PC-9 (cell line): ENCODE measurements at regions of chr9 and their contacts with region 1.

Region 1: GRCh38 chr9:84397151-84397728 is 56.7 kb upstream of the SLC28A3 start:
- DNase-seq: peak; percentile 38 to 68
- H3K4me3 ChIP-seq: no peak overlapping the region
- H3K27ac ChIP-seq: no peak overlapping the region
- H3K4me1 ChIP-seq: no peaks in the 10 kb centered on the region
- H3K27me3 ChIP-seq: no peaks in the 10 kb centered on the region
- CTCF ChIP-seq: peak; percentile 92

Region 2: DNA sequence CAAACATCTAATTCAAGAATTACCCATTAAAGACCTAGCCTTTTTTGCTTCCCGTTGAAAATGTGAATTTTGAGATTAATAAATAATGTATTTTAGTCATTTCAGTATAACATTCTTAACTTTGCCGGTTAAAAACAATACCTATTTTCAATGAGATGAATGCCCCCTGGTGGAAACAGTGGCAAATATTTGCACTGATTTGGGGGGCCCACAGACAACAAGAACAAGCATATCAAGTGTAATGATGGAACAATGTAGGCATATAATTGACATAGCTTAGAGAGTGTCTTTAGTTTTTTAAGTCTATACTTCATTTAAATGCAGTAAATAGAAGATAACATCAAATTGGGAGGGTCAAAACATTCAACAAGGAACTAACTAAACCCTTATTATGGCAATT is 384.2 kb after region 1 on chr9:
- CTCF ChIA-PET with region 1: no interaction called
- POLR2A ChIA-PET with region 1: no interaction called
- intact Hi-C with region 1: loop called (anchors 10 kb)
- DNase-seq: no peak
- H3K4me3 ChIP-seq: no peak overlapping the region
- H3K27ac ChIP-seq: no peak overlapping the region
- H3K4me1 ChIP-seq: no peaks in the 10 kb centered on the region
- H3K27me3 ChIP-seq: peaks cover 10% of the 10 kb centered on the region; the same call in 1 of the 2 replicates
- CTCF ChIP-seq: peak; percentile 55

Region 3: DNA sequence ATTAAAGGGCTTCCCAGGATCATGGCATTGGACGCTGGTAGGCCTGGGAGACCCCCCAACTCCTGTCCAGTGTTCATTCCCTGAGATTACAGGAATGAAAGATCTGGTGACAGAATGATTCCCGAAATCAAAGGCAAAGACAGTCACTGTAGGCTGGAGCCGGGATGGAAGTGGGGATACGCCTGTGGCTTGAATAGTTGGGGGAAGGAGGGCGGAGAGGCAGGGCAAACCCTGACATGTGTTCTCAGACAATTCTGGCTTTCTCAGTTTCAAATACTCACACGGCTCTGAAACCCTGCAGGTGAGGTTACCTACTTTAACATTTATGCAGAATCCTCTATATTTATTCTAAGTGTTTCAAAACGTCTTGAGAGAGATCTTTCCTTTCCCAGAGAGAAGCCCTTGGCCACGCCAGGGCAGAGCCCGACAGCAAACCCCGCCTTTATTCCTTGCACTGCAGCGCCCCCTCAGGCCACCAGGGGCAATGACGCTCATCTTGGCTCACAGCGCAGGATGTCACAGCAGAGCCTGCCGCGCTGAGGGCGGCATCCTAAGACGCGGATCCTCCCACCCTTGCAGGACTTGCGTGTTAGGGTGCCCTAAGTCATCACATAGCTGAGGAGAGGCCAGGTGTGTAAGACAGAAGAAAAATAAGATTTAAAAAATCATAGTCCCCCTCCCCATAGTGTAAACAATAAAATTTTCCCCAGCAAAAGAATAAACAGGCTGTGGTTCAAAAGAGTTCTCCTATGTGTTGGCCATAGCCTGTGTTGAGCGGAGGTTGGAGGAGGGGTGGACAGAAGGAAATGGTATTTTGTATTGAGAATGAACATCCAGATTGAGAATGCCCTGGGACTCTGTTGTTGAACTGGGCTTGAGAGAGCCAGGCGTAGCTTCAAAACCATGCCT is 556.8 kb after region 1 on chr9:
- CTCF ChIA-PET with region 1: no interaction called
- POLR2A ChIA-PET with region 1: no interaction called
- intact Hi-C with region 1: loop called (anchors 5 kb)
- DNase-seq: peak in 1 of 2 experiments; percentile 52
- H3K4me3 ChIP-seq: no peak overlapping the region
- H3K27ac ChIP-seq: no peak overlapping the region
- H3K4me1 ChIP-seq: no peaks in the 10 kb centered on the region
- H3K27me3 ChIP-seq: peaks cover 5% of the 10 kb centered on the region; the same call in 1 of the 2 replicates
- CTCF ChIP-seq: peak; percentile 82

Region 4: GRCh38 chr9:85431339-85432102 is 1034.3 kb after region 1 on chr9:
- CTCF ChIA-PET with region 1: no interaction called
- POLR2A ChIA-PET with region 1: no interaction called
- intact Hi-C with region 1: loop called (anchors 10 kb)
- DNase-seq: no peak
- H3K4me3 ChIP-seq: no peak overlapping the region
- H3K27ac ChIP-seq: no peak overlapping the region
- H3K4me1 ChIP-seq: no peaks in the 10 kb centered on the region
- H3K27me3 ChIP-seq: peaks cover 70% of the 10 kb centered on the region
- CTCF ChIP-seq: no peak